ENCODE measurements at regions of chr3 and their contacts with region 1.

Region 1: DNA sequence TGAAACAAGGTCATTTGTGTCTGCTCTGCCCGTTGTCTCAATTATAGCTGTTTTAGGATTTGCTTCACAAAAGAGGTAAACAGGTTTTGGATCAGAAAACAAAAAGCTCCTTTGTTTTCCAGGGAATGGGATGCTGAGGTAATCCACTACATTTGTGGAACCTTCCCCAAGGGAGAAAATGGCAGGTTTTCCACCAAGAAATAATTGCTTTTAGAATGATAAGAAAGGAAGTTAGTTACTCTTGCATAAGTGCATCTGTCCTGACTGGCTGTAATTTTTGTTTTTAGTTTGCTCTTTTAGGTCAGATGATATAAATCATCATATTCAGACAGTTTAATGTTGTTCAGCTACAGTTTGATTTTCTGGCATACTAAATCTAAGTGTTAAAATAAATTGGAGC is 198.5 kb upstream of the COL8A1 start:
- DNase-seq: no peak
- ATAC-seq: no peak
- H3K4me3 ChIP-seq: no peak overlapping the region
- H3K27ac ChIP-seq: no peak overlapping the region
- H3K4me1 ChIP-seq: no peaks in the 10 kb centered on the region
- H3K27me3 ChIP-seq: peaks cover 53% of the 10 kb centered on the region
- CTCF ChIP-seq: no peak
- POLR2A ChIP-seq: no peak
- RAD21 ChIP-seq: no peak

Region 2: DNA sequence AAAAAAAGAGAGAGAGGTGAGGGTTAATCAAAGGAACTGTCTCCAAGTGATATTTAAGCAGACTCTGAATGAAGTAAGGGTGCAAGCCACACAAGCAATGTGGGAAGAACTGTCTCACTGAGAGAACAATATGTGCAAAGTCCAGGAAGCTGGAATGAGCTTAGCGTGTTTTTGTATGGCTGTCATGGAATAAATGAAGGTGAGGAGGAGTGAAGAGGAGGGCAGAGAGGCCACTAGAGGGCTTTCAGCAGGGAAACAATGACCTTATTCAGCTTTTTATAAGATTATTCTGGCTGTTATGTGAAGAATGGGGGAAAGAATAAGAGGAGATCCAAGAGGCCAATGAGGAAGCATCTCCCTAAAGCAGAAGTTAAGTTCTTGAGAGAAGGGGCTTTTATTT is 111.6 kb after region 1 on chr3:
- CTCF ChIA-PET with region 1: no interaction called
- POLR2A ChIA-PET with region 1: no interaction called
- RAD21 ChIA-PET with region 1: no interaction called
- intact Hi-C with region 1: no loop called
- DNase-seq: no peak
- ATAC-seq: no peak
- H3K4me3 ChIP-seq: no peak overlapping the region
- H3K27ac ChIP-seq: no peak overlapping the region
- H3K4me1 ChIP-seq: no peaks in the 10 kb centered on the region
- H3K27me3 ChIP-seq: peaks cover 17% of the 10 kb centered on the region
- CTCF ChIP-seq: peak in 2 of 3 experiments; percentile 28 to 40; a peak in 2 of 6 replicates
- POLR2A ChIP-seq: no peak
- RAD21 ChIP-seq: no peak

Region 3: GRCh38 chr3:99714146-99714545 is 274.3 kb after region 1 on chr3:
- CTCF ChIA-PET with region 1: no interaction called
- POLR2A ChIA-PET with region 1: no interaction called
- RAD21 ChIA-PET with region 1: no interaction called
- intact Hi-C with region 1: loop called (anchors 5 kb)
- DNase-seq: no peak
- ATAC-seq: no peak
- H3K4me3 ChIP-seq: no peak overlapping the region
- H3K27ac ChIP-seq: no peak overlapping the region
- H3K4me1 ChIP-seq: no peaks in the 10 kb centered on the region
- H3K27me3 ChIP-seq: peaks cover 70% of the 10 kb centered on the region
- CTCF ChIP-seq: no peak
- POLR2A ChIP-seq: no peak
- RAD21 ChIP-seq: no peak